T-cell (primary cell): ENCODE measurements at regions of chr6 and their contacts with region 1.

Region 1: GRCh38 chr6:84193114-84193708 is 34.2 kb downstream of the CEP162 start:
- DNase-seq: no peak
- ATAC-seq: no peak
- H3K4me3 ChIP-seq: no peak overlapping the region
- H3K4me3 Mint-ChIP-seq: no peak overlapping the region
- H3K27ac ChIP-seq: no peak overlapping the region
- H3K27ac Mint-ChIP-seq: no peak overlapping the region
- H3K4me1 ChIP-seq: no peaks in the 10 kb centered on the region
- H3K4me1 Mint-ChIP-seq: no peaks in the 10 kb centered on the region
- H3K27me3 ChIP-seq: no peaks in the 10 kb centered on the region
- H3K27me3 Mint-ChIP-seq: no peaks in the 10 kb centered on the region

Region 2: GRCh38 chr6:83151114-83151513 is 1042.1 kb before region 1 on chr6:
- CTCF ChIA-PET with region 1: interaction called in 1 of 2 experiments, 10 read pairs
- POLR2A ChIA-PET with region 1: no interaction called
- DNase-seq: no peak
- ATAC-seq: no peak
- H3K4me3 ChIP-seq: no peak overlapping the region
- H3K4me3 Mint-ChIP-seq: no peak overlapping the region
- H3K27ac ChIP-seq: no peak overlapping the region
- H3K27ac Mint-ChIP-seq: no peak overlapping the region
- H3K4me1 ChIP-seq: no peaks in the 10 kb centered on the region
- H3K4me1 Mint-ChIP-seq: peaks cover 0 to 10% (median 0%) of the 10 kb centered on the region in 3 donors
- H3K27me3 ChIP-seq: no peaks in the 10 kb centered on the region
- H3K27me3 Mint-ChIP-seq: no peaks in the 10 kb centered on the region

Region 3: GRCh38 chr6:84204011-84204410 is 10.8 kb after region 1 on chr6:
- CTCF ChIA-PET with region 1: no interaction called
- POLR2A ChIA-PET with region 1: no interaction called
- DNase-seq: no peak
- ATAC-seq: no peak
- H3K4me3 ChIP-seq: no peak overlapping the region
- H3K4me3 Mint-ChIP-seq: no peak overlapping the region
- H3K27ac ChIP-seq: no peak overlapping the region
- H3K27ac Mint-ChIP-seq: no peak overlapping the region
- H3K4me1 ChIP-seq: no peaks in the 10 kb centered on the region
- H3K4me1 Mint-ChIP-seq: peaks cover 0 to 8% (median 0%) of the 10 kb centered on the region in 3 donors
- H3K27me3 ChIP-seq: no peaks in the 10 kb centered on the region
- H3K27me3 Mint-ChIP-seq: no peaks in the 10 kb centered on the region

Region 4: GRCh38 chr6:84220809-84221409 is 27.7 kb after region 1 on chr6:
- CTCF ChIA-PET with region 1: no interaction called
- POLR2A ChIA-PET with region 1: no interaction called
- DNase-seq: peak in 1 of 35 experiments; percentile 40
- ATAC-seq: no peak
- H3K4me3 ChIP-seq: no peak overlapping the region
- H3K4me3 Mint-ChIP-seq: no peak overlapping the region
- H3K27ac ChIP-seq: no peak overlapping the region
- H3K27ac Mint-ChIP-seq: no peak overlapping the region
- H3K4me1 ChIP-seq: no peaks in the 10 kb centered on the region
- H3K4me1 Mint-ChIP-seq: peaks cover 4 to 12% (median 4%) of the 10 kb centered on the region in 3 donors
- H3K27me3 ChIP-seq: no peaks in the 10 kb centered on the region
- H3K27me3 Mint-ChIP-seq: no peaks in the 10 kb centered on the region